CD8-positive, alpha-beta T cell (primary cell): ENCODE measurements at regions of chr2 and their contacts with region 1.

Region 1: DNA sequence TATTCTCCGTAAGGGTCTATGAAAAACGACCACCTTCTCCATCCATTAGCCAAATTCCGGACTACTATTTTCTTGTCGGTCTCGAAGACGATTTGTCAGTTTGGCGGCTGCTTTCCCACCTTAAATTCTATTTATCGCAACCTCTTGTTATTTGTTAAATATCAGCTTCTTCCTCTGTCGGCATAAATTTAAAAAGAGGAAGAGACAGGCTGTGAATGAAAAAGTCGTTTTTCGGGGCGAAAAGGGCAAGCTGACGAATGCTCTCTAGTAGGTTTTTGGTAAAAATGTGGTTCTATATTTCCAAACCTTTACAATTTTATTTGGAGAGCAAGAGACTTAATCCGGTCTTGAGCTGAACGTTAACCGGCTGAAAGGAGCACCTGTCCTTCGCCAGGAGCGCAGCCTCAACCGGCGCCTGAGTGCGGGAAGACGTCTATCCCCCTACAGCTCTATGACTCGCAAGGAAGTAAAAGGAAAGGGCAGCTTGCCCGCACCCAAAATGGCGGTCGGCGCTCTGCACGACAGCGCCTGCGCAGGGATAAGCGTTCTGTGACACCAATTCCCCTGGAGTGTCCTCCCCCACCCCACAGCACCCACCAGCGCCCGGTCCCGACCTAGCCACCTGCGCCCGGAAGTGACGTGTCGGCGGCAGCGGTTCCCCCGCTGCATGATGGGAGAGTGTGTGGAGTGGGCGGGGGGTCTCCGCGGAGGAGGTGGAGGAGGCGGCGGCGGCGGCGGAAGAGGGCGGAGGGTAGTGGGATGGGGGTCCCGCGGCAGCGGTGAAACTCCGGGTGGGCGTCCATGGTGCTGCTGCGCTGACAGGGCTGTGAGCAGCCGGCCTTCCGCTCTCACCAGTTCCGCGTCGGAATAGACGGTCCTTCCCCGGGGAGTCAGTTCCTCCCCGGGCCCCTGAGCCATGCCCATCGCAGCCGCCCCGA is at the start of gene AFTPH:
- DNase-seq: peak; percentile 99 to 100 (median 99)
- ATAC-seq: peak; percentile 88
- H3K4me3 ChIP-seq: peak within 1 kb of the TSS; percentile 69 to 83
- H3K4me3 Mint-ChIP-seq: peak within 1 kb of the TSS; percentile 99
- H3K27ac ChIP-seq: peak within 1 kb of the TSS; percentile 77 to 89
- H3K27ac Mint-ChIP-seq: peak within 1 kb of the TSS; percentile 99
- H3K4me1 ChIP-seq: peaks cover 20% of the 10 kb centered on the region
- H3K4me1 Mint-ChIP-seq: peaks cover 38% of the 10 kb centered on the region
- H3K27me3 ChIP-seq: no peaks in the 10 kb centered on the region
- H3K27me3 Mint-ChIP-seq: no peaks in the 10 kb centered on the region
- CTCF ChIP-seq: no peak
- total RNA-seq, gene AFTPH: 23.0 to 25.9 TPM

Region 2: DNA sequence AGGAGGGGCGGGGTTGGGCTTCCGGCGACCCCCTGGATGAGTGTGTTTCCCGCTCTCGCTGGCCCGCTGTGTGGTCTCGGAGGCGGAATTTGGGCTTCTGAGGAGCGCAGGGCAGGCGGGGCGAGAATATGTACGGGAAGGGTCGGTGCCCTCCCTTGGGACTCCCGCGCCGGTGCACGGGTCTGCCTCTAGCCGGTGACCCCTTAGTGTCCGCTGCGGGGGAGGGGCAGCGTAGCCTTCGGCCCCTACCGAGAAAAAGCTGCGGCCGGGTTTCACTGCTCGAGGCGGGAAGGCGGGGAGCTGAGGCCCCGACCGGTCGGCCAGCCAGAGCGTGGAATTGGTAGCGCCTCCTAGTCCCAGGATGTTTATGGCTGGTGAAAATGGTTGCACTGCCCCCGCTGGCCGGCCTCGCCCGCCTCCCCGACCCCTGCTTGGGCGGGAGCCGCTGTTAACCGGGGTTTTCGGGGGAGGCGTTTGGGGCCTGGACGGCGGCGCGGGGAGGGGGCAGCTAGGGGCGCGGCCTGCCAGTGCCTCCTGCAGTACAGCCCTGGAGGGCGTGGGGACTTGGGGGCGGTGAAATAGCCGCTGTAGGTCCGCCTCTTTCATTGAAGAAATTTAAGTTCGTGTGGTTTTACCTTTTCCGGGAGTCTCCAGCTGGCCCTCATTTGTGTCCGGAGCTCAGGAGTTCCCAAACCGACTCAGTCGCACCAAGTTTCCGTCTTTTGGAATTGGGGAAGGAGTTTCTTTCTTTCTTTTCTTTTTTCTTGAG is 682.5 kb before region 1 on chr2 and contains the start of gene UGP2:
- CTCF ChIA-PET with region 1: no interaction called
- POLR2A ChIA-PET with region 1: no interaction called
- intact Hi-C with region 1: loop called (anchors 5 to 10 kb)
- DNase-seq: peak; percentile 68 to 92 (median 83)
- ATAC-seq: peak; percentile 68
- H3K4me3 ChIP-seq: peak within 1 kb of the TSS; percentile 94 to 98
- H3K4me3 Mint-ChIP-seq: peak within 1 kb of the TSS; percentile 99
- H3K27ac ChIP-seq: peak within 1 kb of the TSS; percentile 81 to 89
- H3K27ac Mint-ChIP-seq: peak within 1 kb of the TSS; percentile 98
- H3K4me1 ChIP-seq: peaks cover 41% of the 10 kb centered on the region
- H3K4me1 Mint-ChIP-seq: peaks cover 52% of the 10 kb centered on the region
- H3K27me3 ChIP-seq: no peaks in the 10 kb centered on the region
- H3K27me3 Mint-ChIP-seq: no peaks in the 10 kb centered on the region
- CTCF ChIP-seq: peak; percentile 24
- total RNA-seq, gene UGP2: 43.9 to 48.2 TPM

Region 3: GRCh38 chr2:64562148-64562784 is 38.3 kb after region 1 on chr2:
- CTCF ChIA-PET with region 1: interaction called, 105 read pairs
- POLR2A ChIA-PET with region 1: interaction called, 4 read pairs
- intact Hi-C with region 1: loop called (anchors 1 kb)
- DNase-seq: peak in 2 of 9 experiments; percentile 46 to 61
- ATAC-seq: peak; percentile 78
- H3K4me3 ChIP-seq: no peak overlapping the region
- H3K4me3 Mint-ChIP-seq: no peak overlapping the region
- H3K27ac ChIP-seq: no peak overlapping the region
- H3K27ac Mint-ChIP-seq: no peak overlapping the region
- H3K4me1 ChIP-seq: peaks cover 14% of the 10 kb centered on the region
- H3K4me1 Mint-ChIP-seq: peaks cover 30% of the 10 kb centered on the region
- H3K27me3 ChIP-seq: no peaks in the 10 kb centered on the region
- H3K27me3 Mint-ChIP-seq: no peaks in the 10 kb centered on the region
- CTCF ChIP-seq: peak; percentile 58

Region 4: DNA sequence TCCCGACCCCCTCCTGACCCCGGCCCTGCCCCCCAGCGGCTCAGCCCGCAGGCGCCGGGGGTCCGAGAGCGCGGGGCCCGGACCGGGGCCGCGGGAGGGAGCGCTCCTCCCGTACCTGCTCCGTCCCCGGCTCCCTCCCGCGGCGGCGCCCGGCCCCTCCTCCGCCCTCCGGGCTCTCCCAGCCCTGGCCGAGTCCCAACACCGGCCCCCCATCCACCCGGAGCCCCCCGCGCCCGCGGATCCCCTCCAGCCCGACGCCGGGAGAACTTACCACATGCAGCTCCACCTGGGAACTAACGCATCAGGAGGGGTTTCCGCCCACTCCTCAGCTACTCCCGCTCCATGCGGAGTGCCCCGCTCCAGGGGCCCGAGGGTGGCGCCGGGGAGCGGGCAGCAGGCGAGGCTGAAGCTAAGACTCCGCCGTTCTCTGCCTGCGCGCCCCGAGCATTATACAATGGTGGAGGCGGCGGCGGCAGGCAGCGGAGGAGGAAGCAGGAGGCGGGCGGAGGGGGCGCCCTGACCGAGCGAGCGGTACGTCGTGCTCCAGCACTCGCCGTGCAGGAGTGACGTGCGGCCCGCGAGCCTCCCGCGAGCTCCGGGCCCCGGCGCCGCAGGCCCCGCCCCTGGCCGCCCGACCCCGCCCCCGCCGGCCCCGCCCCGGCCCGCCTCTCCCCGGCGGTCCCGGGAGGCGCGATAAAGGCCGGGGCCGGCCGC is 129.6 kb after region 1 on chr2 and contains the start of gene SERTAD2:
- CTCF ChIA-PET with region 1: interaction called, 5 read pairs
- POLR2A ChIA-PET with region 1: interaction called, 21 read pairs
- intact Hi-C with region 1: loop called (anchors 1 to 5 kb)
- DNase-seq: peak; percentile 72 to 95 (median 87)
- ATAC-seq: peak; percentile 82
- H3K4me3 ChIP-seq: peak within 1 kb of the TSS; percentile 84 to 85
- H3K4me3 Mint-ChIP-seq: peak within 1 kb of the TSS; percentile 94
- H3K27ac ChIP-seq: peak within 1 kb of the TSS; percentile 86 to 90
- H3K27ac Mint-ChIP-seq: peak within 1 kb of the TSS; percentile 97
- H3K4me1 ChIP-seq: peaks cover 63% of the 10 kb centered on the region
- H3K4me1 Mint-ChIP-seq: peaks cover 78% of the 10 kb centered on the region
- H3K27me3 ChIP-seq: no peaks in the 10 kb centered on the region
- H3K27me3 Mint-ChIP-seq: no peaks in the 10 kb centered on the region
- CTCF ChIP-seq: no peak
- total RNA-seq, gene SERTAD2: 47.5 to 48.8 TPM

Region 5: DNA sequence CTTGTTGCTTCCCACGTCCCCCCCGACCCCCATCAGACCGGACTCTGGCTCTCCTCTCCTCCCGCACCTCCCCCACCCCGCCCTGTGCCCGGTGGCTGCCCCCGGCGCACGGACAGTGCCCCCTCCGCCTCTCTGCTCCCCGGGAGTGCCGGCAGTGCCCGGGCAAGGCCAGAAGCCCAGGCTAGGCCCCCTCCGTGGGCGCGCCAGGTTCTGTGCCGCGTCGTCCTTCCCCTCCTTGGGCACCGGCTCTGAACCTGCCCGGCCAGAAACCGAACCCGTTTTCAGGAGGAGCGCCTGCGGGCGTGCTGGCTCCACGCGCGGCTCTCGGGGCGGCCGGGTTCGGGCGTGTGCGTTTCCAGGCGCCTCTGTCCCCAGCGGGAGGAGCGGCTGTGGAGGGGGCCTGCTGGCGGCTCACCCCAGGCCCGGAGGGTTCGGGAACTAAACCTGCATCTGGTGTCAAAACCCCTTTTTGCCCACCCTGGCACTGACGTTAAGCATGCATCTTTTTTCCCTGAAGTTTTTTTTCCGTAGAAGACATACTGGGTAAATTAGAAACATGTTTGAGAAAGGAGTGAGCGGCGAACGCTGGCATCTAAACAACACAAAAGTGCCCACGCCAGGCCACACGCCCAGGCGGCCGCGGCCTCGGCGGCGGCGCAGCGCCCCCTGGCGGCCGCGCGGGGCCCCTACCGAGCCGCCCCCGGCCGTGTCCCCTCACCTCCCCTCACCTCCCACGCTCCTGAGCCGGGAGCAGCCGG is 341.3 kb after region 1 on chr2:
- CTCF ChIA-PET with region 1: interaction called, 20 read pairs
- POLR2A ChIA-PET with region 1: interaction called, 3 read pairs
- intact Hi-C with region 1: loop called (anchors 1 to 2 kb)
- DNase-seq: peak; percentile 39 to 84 (median 55)
- ATAC-seq: peak; percentile 91
- H3K4me3 ChIP-seq: peak overlapping the region; percentile 61 to 76
- H3K4me3 Mint-ChIP-seq: peak overlapping the region; percentile 81
- H3K27ac ChIP-seq: no peak overlapping the region
- H3K27ac Mint-ChIP-seq: no peak overlapping the region
- H3K4me1 ChIP-seq: peaks cover 13% of the 10 kb centered on the region
- H3K4me1 Mint-ChIP-seq: no peaks in the 10 kb centered on the region
- H3K27me3 ChIP-seq: peaks cover 0 to 2% of the 10 kb centered on the region in 2 experiments
- H3K27me3 Mint-ChIP-seq: peaks cover 4% of the 10 kb centered on the region
- CTCF ChIP-seq: peak; percentile 80

Region 6: GRCh38 chr2:64988420-64989125 is 464.6 kb after region 1 on chr2:
- CTCF ChIA-PET with region 1: no interaction called
- POLR2A ChIA-PET with region 1: no interaction called
- intact Hi-C with region 1: loop called in 1 of 2 experiments (anchors 2 kb)
- DNase-seq: peak; percentile 10 to 82 (median 51)
- ATAC-seq: peak; percentile 41
- H3K4me3 ChIP-seq: peak overlapping the region; percentile 57 to 68
- H3K4me3 Mint-ChIP-seq: peak overlapping the region; percentile 77
- H3K27ac ChIP-seq: peak overlapping the region; percentile 31 to 36
- H3K27ac Mint-ChIP-seq: no peak overlapping the region
- H3K4me1 ChIP-seq: peaks cover 11% of the 10 kb centered on the region
- H3K4me1 Mint-ChIP-seq: peaks cover 27% of the 10 kb centered on the region
- H3K27me3 ChIP-seq: no peaks in the 10 kb centered on the region
- H3K27me3 Mint-ChIP-seq: peaks cover 7% of the 10 kb centered on the region
- CTCF ChIP-seq: no peak

Region 7: DNA sequence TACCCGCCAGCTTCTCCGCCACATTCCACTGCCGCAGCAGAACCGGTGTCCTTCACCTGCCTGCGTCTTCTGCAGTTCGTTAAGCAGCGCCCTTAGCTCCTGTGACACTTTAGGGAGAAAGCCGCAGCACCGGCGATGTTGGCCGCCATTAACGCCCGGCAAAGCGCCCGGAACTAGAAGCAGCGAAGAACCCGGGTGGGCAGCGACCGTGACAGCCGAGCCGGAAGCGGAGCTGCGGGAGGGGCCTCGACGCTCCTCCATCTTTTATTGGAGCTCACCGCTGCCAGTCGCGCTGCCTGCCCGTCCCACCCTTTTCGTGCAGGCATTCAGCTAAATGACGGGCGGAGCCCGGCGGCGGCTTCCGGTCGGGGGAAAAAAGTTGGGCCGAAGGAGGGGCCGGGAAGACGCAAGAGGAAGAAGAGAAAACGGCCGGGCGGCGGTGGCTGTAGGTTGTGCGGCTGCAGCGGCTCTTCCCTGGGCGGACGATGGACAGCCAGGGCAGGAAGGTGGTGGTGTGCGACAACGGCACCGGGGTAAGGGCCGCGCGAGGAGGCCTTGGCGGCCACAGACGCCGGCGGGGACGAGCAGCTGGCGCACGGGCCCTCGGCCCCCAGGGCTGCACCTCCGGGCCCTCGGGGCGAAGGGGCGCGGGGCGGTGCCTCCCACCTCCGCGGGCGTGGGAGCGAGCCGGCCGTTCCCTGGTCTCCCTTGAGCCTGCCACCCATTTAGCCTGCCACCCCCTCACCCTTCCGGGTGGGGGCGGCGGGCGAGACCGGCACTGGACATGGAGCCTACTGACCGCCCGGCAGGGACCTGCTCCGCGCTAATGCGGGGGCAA is 703.7 kb after region 1 on chr2 and contains the start of gene ACTR2:
- CTCF ChIA-PET with region 1: no interaction called
- POLR2A ChIA-PET with region 1: no interaction called
- intact Hi-C with region 1: loop called (anchors 1 to 10 kb)
- DNase-seq: peak; percentile 87 to 98 (median 94)
- ATAC-seq: peak; percentile 94
- H3K4me3 ChIP-seq: peak within 1 kb of the TSS; percentile 74 to 89
- H3K4me3 Mint-ChIP-seq: peak within 1 kb of the TSS; percentile 99
- H3K27ac ChIP-seq: peak within 1 kb of the TSS; percentile 94 to 98
- H3K27ac Mint-ChIP-seq: peak within 1 kb of the TSS; percentile 99
- H3K4me1 ChIP-seq: peaks cover 43% of the 10 kb centered on the region
- H3K4me1 Mint-ChIP-seq: peaks cover 47% of the 10 kb centered on the region
- H3K27me3 ChIP-seq: no peaks in the 10 kb centered on the region
- H3K27me3 Mint-ChIP-seq: no peaks in the 10 kb centered on the region
- CTCF ChIP-seq: no peak
- total RNA-seq, gene ACTR2: 101 to 117 TPM